ENCODE measurements at regions of chr5 and their contacts with region 1.

Region 1: GRCh38 chr5:91499943-91500531 is 116.9 kb upstream of the ARRDC3 start:
- DNase-seq: peak; percentile 47

Region 2: DNA sequence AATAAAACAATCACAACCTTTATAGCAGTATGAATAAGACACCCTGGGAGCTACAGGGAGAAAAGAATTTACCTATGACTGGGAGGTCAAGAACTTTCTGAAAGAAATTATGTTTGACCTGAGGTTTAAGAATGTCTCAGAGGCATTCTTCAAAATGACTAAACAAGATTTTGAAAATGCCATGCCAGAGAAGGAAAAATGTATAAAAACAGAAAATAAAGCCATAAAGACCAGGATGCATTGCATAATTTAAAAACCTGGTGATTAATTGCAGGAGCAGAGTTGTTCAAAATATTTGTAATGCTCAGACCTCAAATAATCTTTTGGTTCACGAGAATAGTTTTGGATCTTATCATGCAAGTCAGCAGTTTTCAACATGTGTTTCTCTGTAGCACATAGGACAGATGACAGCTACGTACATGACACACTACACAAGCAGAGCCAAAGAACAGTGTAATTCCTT is 837.8 kb after region 1 on chr5:
- in situ Hi-C with region 1: loop called (anchors 10 kb)
- DNase-seq: no peak

Measured in G401 (cell line).